H1 (cell line): ENCODE measurements at regions of chr10 and their contacts with region 1.

Region 1: DNA sequence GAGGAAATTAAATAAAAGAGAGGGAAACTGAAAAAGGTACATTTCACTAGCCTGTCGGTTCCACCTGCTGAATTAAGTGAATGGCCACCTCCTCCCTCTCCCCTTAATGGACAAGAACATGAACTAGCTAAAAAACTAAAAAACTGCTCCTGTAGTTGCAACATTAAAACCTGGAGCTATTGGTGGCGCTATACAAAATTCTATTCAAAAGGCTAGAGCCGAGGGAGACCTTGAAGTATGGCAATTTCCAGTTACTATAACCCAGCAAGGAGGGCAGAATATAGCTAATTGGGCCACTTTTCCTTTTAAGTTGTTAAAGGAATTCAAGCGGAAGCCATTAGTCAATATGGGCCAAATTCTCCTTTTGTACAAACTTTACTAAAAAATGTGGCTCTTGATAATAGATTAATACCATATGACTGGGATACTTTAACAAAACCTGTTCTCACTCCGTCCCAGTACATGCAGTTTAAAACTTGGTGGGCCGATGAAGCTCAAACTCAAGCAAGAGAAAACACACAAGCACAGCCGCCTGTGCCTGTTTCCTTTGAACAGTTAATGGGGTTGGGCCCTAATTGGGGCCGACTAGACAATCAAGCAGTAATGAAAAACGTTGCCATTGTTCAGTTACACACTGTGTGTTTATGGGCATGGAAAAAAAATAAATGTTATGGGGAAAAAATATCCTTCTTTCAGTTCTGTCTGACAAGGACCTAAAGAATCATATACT is 6.5 kb upstream of the CHST3 start:
- DNase-seq: no peak
- H3K4me3 ChIP-seq: no peak overlapping the region
- H3K27ac ChIP-seq: no peak overlapping the region
- H3K4me1 ChIP-seq: no peaks in the 10 kb centered on the region
- H3K27me3 ChIP-seq: peaks cover 0 to 10% (median 5%) of the 10 kb centered on the region in 4 experiments; a peak in 6 of 7 replicates
- CTCF ChIP-seq: peak in 2 of 3 experiments; percentile 37 to 40; a peak in 2 of 4 replicates
- EP300 ChIP-seq: no peak
- POLR2A ChIP-seq: no peak
- RAD21 ChIP-seq: peak in 1 of 2 experiments; percentile 10; a peak in 1 of 4 replicates

Region 2: GRCh38 chr10:71696628-71697326 is 260.9 kb before region 1 on chr10:
- CTCF ChIA-PET with region 1: no interaction called
- POLR2A ChIA-PET with region 1: no interaction called
- DNase-seq: peak; percentile 41 to 95
- H3K4me3 ChIP-seq: no peak overlapping the region
- H3K27ac ChIP-seq: no peak overlapping the region
- H3K4me1 ChIP-seq: no peaks in the 10 kb centered on the region; a peak in 1 of 7 replicates
- H3K27me3 ChIP-seq: no peaks in the 10 kb centered on the region
- CTCF ChIP-seq: peak; percentile 94 to 95 (median 95)
- EP300 ChIP-seq: no peak
- POLR2A ChIP-seq: no peak
- RAD21 ChIP-seq: peak; percentile 81 to 87

Region 3: GRCh38 chr10:71893920-71894319 is 63.8 kb before region 1 on chr10:
- CTCF ChIA-PET with region 1: interaction called, 26 read pairs
- POLR2A ChIA-PET with region 1: no interaction called
- DNase-seq: no peak
- H3K4me3 ChIP-seq: no peak overlapping the region
- H3K27ac ChIP-seq: no peak overlapping the region
- H3K4me1 ChIP-seq: no peaks in the 10 kb centered on the region
- H3K27me3 ChIP-seq: peaks cover 4 to 16% (median 12%) of the 10 kb centered on the region in 4 experiments
- CTCF ChIP-seq: no peak
- EP300 ChIP-seq: no peak
- POLR2A ChIP-seq: no peak
- RAD21 ChIP-seq: no peak

Region 4: DNA sequence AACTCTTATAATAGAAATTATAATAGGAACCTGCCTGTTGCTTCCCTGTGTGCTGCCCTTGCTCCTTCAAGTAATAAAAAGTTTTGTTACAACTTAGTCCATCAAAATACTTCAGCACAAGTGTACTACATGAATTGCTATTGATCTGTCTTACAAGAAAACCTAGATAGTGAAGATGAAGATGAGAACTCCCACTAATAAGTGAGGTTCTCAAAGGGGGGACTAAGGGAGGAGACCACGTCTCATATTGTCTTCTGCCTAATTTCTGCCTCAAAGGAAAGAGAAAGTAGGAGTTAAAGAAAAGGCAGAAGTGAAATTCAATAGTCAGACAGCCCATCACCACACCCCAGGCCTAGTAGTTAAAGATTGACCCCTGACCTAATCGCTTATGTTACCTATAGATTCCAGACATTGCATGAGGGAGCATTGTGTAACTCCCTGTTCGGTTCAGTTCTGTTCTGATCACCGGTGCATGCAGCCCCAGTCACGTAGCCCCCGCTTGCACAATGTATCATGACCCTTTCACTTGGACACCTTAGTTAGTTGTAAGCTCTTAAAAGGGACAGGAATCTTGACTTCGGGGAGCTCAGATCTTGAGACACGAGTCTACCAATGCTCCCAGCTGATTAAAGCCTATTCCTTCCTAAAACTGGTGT is 11.8 kb before region 1 on chr10:
- CTCF ChIA-PET with region 1: interaction called, 34 read pairs
- POLR2A ChIA-PET with region 1: no interaction called
- DNase-seq: no peak
- H3K4me3 ChIP-seq: no peak overlapping the region
- H3K27ac ChIP-seq: no peak overlapping the region
- H3K4me1 ChIP-seq: no peaks in the 10 kb centered on the region
- H3K27me3 ChIP-seq: no peaks in the 10 kb centered on the region
- CTCF ChIP-seq: no peak
- EP300 ChIP-seq: peak in 1 of 2 experiments; percentile 94; a peak in 1 of 3 replicates
- POLR2A ChIP-seq: no peak
- RAD21 ChIP-seq: no peak

Region 5: DNA sequence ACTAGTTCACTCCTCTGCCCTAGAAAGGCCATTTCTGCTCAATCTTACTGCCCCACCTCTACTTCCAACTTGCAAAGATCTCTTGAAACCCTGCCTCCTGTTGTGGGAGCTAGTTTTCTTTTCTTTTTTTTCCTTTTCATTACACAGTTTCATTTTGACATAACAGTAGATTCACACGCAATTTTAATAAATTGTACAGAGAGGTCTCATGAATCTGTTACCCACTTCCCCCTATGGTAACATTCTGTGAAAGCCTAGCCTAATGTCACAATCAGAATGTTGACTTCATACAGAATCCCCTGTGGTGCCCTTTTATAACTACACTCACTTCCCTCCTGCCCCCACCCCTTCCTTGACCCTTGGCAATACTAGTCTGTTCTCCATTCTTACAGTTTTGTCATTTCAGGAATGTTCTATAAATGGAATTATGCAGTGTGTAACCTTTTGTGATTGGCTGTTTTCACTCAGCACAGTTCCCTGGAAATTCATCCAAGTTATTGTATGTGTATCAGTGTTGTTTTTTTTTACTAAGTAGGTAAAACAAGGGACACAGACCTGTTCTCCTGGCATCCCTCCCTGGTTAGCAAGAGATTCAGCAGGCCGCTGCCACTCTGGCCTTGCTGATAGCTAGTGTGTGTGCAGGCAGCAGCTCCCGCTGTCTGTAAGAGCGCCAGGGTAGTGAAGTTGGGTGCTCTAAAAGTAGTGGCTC is 28.0 kb after region 1 on chr10:
- CTCF ChIA-PET with region 1: interaction called, 13 read pairs
- POLR2A ChIA-PET with region 1: no interaction called
- DNase-seq: no peak
- H3K4me3 ChIP-seq: no peak overlapping the region
- H3K27ac ChIP-seq: no peak overlapping the region
- H3K4me1 ChIP-seq: peaks cover 0 to 3% (median 1%) of the 10 kb centered on the region in 4 experiments; a peak in 1 of 7 replicates
- H3K27me3 ChIP-seq: no peaks in the 10 kb centered on the region
- CTCF ChIP-seq: no peak
- EP300 ChIP-seq: no peak
- POLR2A ChIP-seq: no peak
- RAD21 ChIP-seq: no peak

Region 6: GRCh38 chr10:72038458-72039001 is 80.8 kb after region 1 on chr10:
- CTCF ChIA-PET with region 1: interaction called, 13 read pairs
- POLR2A ChIA-PET with region 1: no interaction called
- DNase-seq: no peak
- H3K4me3 ChIP-seq: no peak overlapping the region
- H3K27ac ChIP-seq: no peak overlapping the region
- H3K4me1 ChIP-seq: peaks cover 0 to 4% (median 4%) of the 10 kb centered on the region in 4 experiments; a peak in 3 of 7 replicates
- H3K27me3 ChIP-seq: peaks cover 0 to 2% (median 0%) of the 10 kb centered on the region in 4 experiments; a peak in 1 of 7 replicates
- CTCF ChIP-seq: no peak
- EP300 ChIP-seq: no peak
- POLR2A ChIP-seq: no peak
- RAD21 ChIP-seq: no peak

Region 7: DNA sequence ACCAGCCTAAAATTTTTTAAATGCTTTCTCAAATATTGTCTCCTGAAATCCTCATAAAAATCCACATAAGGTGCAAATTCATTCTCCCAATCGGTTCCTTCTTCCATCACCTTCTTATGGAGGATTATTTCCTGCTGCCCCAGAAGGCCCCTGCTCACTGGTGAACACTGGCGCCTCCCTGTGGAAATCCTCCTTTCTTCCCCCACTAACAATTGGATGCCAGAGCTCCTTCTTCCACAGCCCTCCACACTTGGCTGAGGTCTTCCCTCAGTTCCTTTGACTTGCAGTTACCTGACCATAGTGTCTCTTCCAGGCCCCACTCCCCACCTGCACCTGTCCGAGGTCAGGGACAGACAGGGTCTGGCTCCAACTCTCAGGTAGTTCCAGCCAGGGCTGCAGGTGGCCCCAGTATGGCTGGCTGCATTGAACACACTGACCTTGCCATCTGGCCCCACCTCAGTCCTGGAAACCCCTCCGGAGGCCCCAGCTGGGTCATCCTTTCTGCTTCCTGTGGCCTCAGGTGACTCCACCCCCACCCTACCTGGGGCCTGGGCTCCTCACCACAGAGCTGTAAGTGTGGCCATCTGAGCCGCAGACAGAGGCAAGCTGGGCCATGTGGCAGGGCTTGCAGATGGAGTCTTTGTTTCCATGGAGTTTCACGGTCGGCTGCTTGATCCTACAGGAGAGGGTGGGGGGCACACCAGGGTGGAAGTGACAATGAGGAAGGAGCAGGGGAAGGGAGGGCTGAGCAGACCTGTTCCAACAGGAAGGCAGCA is 112.2 kb after region 1 on chr10:
- CTCF ChIA-PET with region 1: interaction called, 11 read pairs
- POLR2A ChIA-PET with region 1: no interaction called
- DNase-seq: peak in 1 of 2 experiments; percentile 67
- H3K4me3 ChIP-seq: no peak overlapping the region
- H3K27ac ChIP-seq: 0 out of 2 replicates have a peak overlapping the region, but pooled peaks have one; percentile 11
- H3K4me1 ChIP-seq: peaks cover 0 to 3% (median 0%) of the 10 kb centered on the region in 4 experiments; a peak in 2 of 7 replicates
- H3K27me3 ChIP-seq: no peaks in the 10 kb centered on the region
- CTCF ChIP-seq: peak; percentile 51 to 59 (median 59)
- EP300 ChIP-seq: no peak
- POLR2A ChIP-seq: no peak
- RAD21 ChIP-seq: peak; percentile 59 to 65

Region 8: DNA sequence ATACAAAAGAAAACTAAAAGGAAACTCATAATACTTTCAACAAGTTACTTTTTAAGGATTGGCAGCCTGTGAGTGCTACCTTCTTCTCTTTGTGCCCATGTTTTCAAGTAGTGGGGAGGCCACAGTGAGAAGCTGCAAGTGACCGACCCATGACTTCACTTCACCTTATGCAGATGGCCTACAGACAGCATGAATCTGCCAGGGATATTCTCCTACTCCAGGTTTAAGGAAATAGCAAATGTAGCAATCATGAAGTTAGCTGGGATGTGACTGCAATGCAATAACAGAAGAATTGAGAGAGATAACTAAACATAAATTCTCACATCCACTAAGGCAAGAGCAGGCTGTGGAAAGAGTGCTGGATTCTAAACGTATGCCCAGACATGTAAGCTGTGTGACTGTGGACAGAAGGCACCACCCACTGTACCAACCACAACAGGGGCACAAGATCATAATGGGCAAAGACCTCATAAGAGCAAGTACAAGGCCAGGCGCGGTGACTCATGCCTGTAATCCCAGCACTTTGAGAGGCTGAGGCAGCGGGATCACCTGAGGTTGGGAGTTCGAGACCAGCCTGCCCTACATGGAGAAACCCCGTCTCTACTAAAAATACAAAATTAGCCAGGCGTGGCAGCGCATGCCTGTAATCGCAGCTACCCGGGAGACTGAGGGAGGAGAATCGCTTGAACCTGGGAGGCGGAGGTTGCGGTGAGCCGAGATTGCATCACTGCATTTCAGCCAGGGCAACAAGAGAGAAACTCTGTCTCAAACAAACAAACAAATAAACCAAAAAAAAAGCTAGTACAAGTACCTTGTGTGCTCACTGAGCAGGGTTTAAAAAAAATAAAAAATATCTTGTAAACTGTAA is 141.6 kb after region 1 on chr10:
- CTCF ChIA-PET with region 1: no interaction called
- POLR2A ChIA-PET with region 1: no interaction called
- DNase-seq: no peak
- H3K4me3 ChIP-seq: no peak overlapping the region
- H3K27ac ChIP-seq: no peak overlapping the region
- H3K4me1 ChIP-seq: no peaks in the 10 kb centered on the region
- H3K27me3 ChIP-seq: no peaks in the 10 kb centered on the region
- CTCF ChIP-seq: no peak
- EP300 ChIP-seq: no peak
- POLR2A ChIP-seq: no peak
- RAD21 ChIP-seq: no peak

Region 9: GRCh38 chr10:72162978-72163377 is 205.3 kb after region 1 on chr10:
- CTCF ChIA-PET with region 1: no interaction called
- POLR2A ChIA-PET with region 1: no interaction called
- DNase-seq: no peak
- H3K4me3 ChIP-seq: no peak overlapping the region
- H3K27ac ChIP-seq: no peak overlapping the region
- H3K4me1 ChIP-seq: no peaks in the 10 kb centered on the region
- H3K27me3 ChIP-seq: no peaks in the 10 kb centered on the region
- CTCF ChIP-seq: no peak
- EP300 ChIP-seq: no peak
- POLR2A ChIP-seq: no peak
- RAD21 ChIP-seq: no peak